ENCODE measurements at regions of chr2 and their contacts with region 1.

Region 1: DNA sequence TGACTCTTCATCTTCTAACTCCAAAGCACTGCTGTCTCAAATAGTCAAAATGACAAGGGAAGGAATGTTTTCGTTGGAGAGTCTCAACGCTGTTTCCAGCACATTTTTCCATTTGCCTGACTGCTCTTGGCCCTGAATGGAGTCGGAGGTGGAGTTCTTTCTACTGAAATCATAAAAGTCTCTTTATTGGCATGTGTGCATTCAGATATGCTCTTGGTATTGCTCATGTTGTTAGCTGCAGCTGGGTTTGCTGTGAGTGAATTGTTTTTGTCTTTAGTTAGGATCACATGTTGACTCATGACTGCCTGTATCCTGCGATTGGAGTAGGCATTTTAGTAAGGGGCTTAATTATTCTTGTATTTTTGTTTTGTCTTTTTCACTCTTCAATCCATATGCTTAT is 16.8 kb downstream of the TMEM17 start:
- DNase-seq: no peak

Region 2: GRCh38 chr2:62038975-62039771 is 450.0 kb before region 1 on chr2:
- CTCF ChIA-PET with region 1: no interaction called
- POLR2A ChIA-PET with region 1: no interaction called
- DNase-seq: no peak

Region 3: DNA sequence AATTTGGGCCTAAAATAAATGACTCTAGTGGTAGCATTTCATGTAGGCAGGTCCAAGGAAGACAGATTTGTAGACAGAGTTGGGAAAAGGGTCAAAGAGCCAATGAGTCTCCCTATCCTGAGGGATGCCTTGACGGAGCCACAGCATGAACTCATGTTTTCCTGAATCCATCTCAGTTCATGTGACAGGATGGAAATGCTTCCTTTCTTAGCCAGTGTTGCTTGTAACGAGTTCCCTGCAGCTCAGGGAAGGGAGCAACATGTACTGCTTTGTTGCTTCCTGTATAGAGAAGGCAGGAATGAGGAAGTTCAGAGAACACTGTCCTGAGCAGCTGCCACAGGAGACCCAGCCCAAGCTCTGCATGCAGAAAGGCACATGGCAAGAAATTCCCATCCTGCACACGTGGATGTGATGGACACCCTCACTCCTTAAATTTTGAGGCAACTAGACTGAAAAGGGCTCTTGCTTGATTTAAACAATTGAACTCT is 11.0 kb before region 1 on chr2:
- CTCF ChIA-PET with region 1: no interaction called
- POLR2A ChIA-PET with region 1: no interaction called
- DNase-seq: no peak

Region 4: DNA sequence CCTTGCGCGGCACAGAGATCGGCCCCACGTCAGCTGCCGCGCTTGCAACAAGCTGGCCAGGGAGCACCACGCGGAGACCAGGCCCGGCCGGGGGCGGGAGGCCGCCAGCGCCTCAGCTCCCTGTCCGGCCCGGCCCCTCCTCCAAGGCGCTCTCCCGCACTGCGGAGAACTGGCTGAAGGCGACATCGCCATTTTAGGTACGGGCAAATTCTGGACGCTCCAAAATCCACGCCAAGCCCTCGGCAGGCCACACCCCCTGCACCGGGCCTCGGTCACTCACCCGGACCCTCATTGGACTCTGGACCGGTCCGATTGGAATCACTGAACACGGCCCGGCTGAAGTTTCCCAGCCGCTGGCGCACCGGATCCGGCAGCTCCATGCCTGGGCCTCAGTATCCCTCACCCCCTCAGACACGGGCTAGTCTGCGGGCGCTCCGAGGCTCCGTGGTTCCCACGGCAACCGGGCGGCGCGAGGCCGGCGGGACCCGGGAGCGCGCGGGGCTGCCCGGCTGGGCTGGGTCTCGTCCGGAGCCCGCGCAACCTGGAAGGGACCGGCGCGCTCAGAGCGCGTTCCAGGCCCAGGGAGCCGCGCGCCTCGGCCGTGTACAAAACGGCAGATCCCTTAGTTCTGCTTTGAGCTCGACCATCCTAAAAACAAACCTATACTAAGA is 16.7 kb after region 1 on chr2 and contains the start of gene TMEM17:
- CTCF ChIA-PET with region 1: interaction called, 3 read pairs
- POLR2A ChIA-PET with region 1: interaction called, 10 read pairs
- DNase-seq: peak; percentile 80

Region 5: DNA sequence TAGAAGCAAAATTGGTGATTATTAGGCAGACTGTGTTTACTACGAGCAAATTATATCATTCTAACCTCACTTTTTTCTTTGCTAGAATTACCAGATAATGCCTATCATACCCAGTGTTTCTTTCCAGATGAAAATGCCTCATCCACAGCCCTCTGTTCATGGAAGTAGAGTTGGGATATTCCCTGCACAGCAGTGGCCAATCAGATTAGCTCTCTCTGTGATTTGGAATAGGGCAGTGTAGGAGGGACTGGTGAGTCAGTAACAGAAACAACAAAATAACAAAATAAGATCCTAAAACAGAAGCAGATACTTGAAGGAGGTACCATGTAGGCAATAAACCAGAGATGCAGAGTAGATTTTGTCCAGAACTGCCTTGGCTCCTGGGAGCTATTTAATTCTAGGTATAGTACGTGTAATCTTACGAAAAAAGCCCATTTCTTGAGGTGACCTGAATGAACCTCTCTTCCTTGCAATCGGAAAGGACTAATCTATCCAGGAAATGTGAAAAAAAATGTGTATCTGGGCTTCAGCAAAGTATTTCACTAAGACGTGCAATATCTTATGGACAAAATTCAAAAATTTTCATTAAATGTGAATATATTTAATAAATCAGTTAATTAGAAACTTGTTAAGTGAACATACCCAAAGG is 35.3 kb after region 1 on chr2:
- CTCF ChIA-PET with region 1: no interaction called
- POLR2A ChIA-PET with region 1: no interaction called
- DNase-seq: no peak